Right cardiac atrium (tissue), 5 donors: ENCODE measurements at regions of chr19 and their contacts with region 1.

Region 1: GRCh38 chr19:34041925-34042521 is 130.3 kb upstream of the LSM14A start:
- DNase-seq: peak; percentile 70 to 87 (median 84)
- ATAC-seq: peak; percentile 47 to 65
- H3K4me3 ChIP-seq: no peak overlapping the region
- H3K27ac ChIP-seq: no peak overlapping the region
- H3K4me1 ChIP-seq: no peaks in the 10 kb centered on the region
- H3K27me3 ChIP-seq: no peaks in the 10 kb centered on the region

Region 2: GRCh38 chr19:33947265-33947964 is 94.6 kb before region 1 on chr19:
- intact Hi-C with region 1: no loop called
- DNase-seq: no peak
- ATAC-seq: no peak
- H3K4me3 ChIP-seq: no peak overlapping the region
- H3K27ac ChIP-seq: no peak overlapping the region
- H3K4me1 ChIP-seq: no peaks in the 10 kb centered on the region
- H3K27me3 ChIP-seq: no peaks in the 10 kb centered on the region

Region 3: GRCh38 chr19:34066007-34066643 is 24.1 kb after region 1 on chr19:
- intact Hi-C with region 1: no loop called
- DNase-seq: no peak
- ATAC-seq: no peak
- H3K4me3 ChIP-seq: no peak overlapping the region
- H3K27ac ChIP-seq: no peak overlapping the region
- H3K4me1 ChIP-seq: no peaks in the 10 kb centered on the region
- H3K27me3 ChIP-seq: no peaks in the 10 kb centered on the region

Region 4: DNA sequence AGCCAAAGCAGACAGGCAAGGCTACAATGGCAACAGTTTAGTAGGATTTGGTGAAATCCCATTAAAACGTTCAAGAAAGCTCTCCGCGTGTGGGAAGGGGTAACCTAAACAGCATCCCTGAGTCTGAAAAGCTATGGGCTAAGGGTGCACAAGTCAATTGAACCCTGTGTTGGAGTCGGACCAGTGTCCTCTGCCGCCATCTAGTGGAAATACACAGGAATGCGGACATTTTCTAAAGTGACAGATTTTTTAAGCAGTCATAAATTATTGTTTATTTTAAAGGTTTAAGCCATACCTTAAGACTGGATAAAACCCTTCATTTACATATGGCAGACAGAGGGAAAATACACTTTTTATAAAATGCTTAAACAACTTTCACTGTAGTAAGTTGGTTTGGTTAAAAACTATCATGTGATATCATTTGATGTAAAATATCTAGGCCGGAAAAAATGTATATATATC is 103.7 kb after region 1 on chr19:
- intact Hi-C with region 1: loop called in 2 of 4 experiments (anchors 5 to 10 kb)
- DNase-seq: peak in 1 of 3 donors; percentile 29
- ATAC-seq: peak in 1 of 2 donors; percentile 61
- H3K4me3 ChIP-seq: no peak overlapping the region
- H3K27ac ChIP-seq: no peak overlapping the region
- H3K4me1 ChIP-seq: no peaks in the 10 kb centered on the region
- H3K27me3 ChIP-seq: no peaks in the 10 kb centered on the region